ENCODE measurements at regions of chr2 and their contacts with region 1.

Region 1: DNA sequence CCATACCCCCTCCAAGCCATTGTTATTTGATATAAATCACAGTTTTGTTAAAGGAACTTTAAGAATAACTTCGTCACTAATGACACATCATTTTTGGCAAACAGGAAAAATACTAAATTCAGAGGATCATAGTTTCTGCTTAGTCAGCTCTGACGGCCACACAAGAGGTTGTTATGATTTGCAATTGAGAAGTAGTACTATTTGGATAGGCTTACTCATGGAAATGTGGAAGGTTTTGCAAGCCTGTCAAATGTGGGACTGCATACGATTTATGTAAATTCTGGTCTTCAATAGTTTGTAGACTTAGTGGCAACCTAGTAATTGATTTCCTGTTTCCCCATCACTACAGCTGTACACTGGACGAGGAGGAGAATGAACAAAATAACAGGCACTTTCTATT is 108.1 kb downstream of the ARHGEF33 start:
- DNase-seq: peak; percentile 98
- ATAC-seq: peak; percentile 96
- H3K4me3 ChIP-seq: no peak overlapping the region
- H3K27ac ChIP-seq: no peak overlapping the region
- H3K4me1 ChIP-seq: no peaks in the 10 kb centered on the region
- H3K27me3 ChIP-seq: no peaks in the 10 kb centered on the region
- CTCF ChIP-seq: no peak
- POLR2A ChIP-seq: no peak
- RAD21 ChIP-seq: no peak

Region 2: DNA sequence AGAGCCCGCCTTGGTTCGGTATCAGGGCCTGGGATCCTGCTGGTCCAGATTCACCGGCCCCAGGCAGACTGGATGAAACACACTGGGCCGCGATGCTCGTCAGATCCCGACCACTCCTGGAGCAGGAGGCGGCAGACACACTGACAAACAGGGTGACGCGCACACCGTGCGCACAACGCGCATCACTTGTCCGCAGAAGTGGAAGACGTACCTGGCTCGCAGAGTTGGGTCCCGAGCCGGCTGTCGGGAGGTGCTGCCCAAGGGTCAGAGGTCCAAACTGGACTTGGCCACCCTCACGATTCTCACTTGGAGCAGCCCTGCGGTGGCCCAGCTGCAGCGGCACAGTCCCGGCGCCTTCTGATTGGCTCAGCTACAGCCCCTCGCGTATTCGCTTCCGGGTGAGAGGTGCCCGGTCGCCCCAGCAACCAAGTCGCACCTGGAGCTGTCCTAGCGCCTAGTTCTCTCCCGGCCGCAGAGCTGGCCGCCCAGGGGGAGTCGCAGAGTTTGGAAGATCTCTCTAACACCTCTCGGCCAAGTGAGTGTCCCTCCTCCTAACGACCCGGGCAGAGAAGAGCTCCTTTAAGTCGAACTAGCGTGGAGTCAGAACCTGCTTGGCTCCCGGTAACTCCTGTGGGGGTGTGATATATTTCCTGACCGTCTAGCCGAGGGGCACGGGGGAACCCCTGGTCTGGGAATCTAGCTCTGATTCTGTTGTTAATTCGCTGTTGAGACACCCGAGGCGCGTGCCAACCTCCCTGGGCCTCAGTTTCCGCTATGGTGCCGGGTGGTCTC is 122.0 kb before region 1 on chr2 and contains the starts of genes DHX57 and MORN2:
- CTCF ChIA-PET with region 1: no interaction called
- POLR2A ChIA-PET with region 1: no interaction called
- dilution Hi-C with region 1: no loop called
- in situ Hi-C with region 1: no loop called
- intact Hi-C with region 1: loop called (anchors 10 kb)
- DNase-seq: peak; percentile 74
- ATAC-seq: peak; percentile 98
- H3K4me3 ChIP-seq: peak within 1 kb of the TSS; percentile 89
- H3K27ac ChIP-seq: peak within 1 kb of the TSS; percentile 52
- H3K4me1 ChIP-seq: no peaks in the 10 kb centered on the region
- H3K27me3 ChIP-seq: no peaks in the 10 kb centered on the region
- CTCF ChIP-seq: no peak
- POLR2A ChIP-seq: no peak; the same call in 1 of the 2 replicates
- RAD21 ChIP-seq: no peak
- total RNA-seq, gene DHX57: 23.9 and 24.4 TPM in 2 replicates
- total RNA-seq, gene MORN2: 13.1 and 27.2 TPM in 2 replicates

Measured in IMR-90 (cell line).